ENCODE measurements at regions of chr19 and their contacts with region 1.

Region 1: GRCh38 chr19:39671738-39672363 is 16.1 kb downstream of the LGALS16 start:
- DNase-seq: peak; percentile 78
- H3K4me3 Mint-ChIP-seq: no peak overlapping the region
- H3K27ac Mint-ChIP-seq: no peak overlapping the region
- H3K4me1 Mint-ChIP-seq: peaks cover 35% of the 10 kb centered on the region
- H3K27me3 Mint-ChIP-seq: peaks cover 1% of the 10 kb centered on the region

Region 2: GRCh38 chr19:39125554-39126311 is 546.1 kb before region 1 on chr19 and contains the start of gene PAK4:
- CTCF ChIA-PET with region 1: no interaction called
- intact Hi-C with region 1: loop called (anchors 10 kb)
- DNase-seq: peak; percentile 99
- H3K4me3 Mint-ChIP-seq: peak within 1 kb of the TSS; percentile 92
- H3K27ac Mint-ChIP-seq: peak within 1 kb of the TSS; percentile 92
- H3K4me1 Mint-ChIP-seq: peaks cover 38% of the 10 kb centered on the region
- H3K27me3 Mint-ChIP-seq: peaks cover 2% of the 10 kb centered on the region
- total RNA-seq, gene PAK4: 16.9 to 18.1 TPM

Region 3: GRCh38 chr19:39474139-39474622 is 197.7 kb before region 1 on chr19:
- CTCF ChIA-PET with region 1: no interaction called
- intact Hi-C with region 1: no loop called
- DNase-seq: peak; percentile 76
- H3K4me3 Mint-ChIP-seq: no peak overlapping the region
- H3K27ac Mint-ChIP-seq: no peak overlapping the region
- H3K4me1 Mint-ChIP-seq: peaks cover 17% of the 10 kb centered on the region
- H3K27me3 Mint-ChIP-seq: no peaks in the 10 kb centered on the region

Region 4: GRCh38 chr19:39502640-39503417 is 169.0 kb before region 1 on chr19:
- CTCF ChIA-PET with region 1: interaction called, 7 read pairs
- intact Hi-C with region 1: loop called (anchors 1 kb)
- DNase-seq: peak; percentile 68
- H3K4me3 Mint-ChIP-seq: no peak overlapping the region
- H3K27ac Mint-ChIP-seq: no peak overlapping the region
- H3K4me1 Mint-ChIP-seq: peaks cover 34% of the 10 kb centered on the region
- H3K27me3 Mint-ChIP-seq: peaks cover 65% of the 10 kb centered on the region

Region 5: DNA sequence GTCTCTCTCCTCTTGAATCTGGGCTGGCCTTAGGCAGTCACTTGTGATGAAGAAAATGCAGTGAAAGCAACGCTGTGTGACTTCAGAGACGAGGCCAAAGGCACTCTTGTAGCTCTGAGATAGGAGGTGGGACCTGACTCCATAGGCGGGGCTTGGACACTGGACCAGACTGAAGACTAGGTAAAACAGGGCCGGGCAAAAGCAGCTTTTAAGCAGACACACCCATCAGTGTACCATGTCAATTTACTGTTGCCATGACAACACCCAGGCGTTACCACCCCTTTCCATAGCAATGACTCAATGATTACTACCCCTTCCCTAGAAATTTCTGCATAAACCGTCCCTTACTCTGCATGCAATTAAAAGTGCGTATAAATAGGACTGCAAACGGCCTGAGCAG is 125.3 kb before region 1 on chr19:
- CTCF ChIA-PET with region 1: interaction called, 92 read pairs
- intact Hi-C with region 1: loop called (anchors 1 kb)
- DNase-seq: no peak
- H3K4me3 Mint-ChIP-seq: no peak overlapping the region
- H3K27ac Mint-ChIP-seq: no peak overlapping the region
- H3K4me1 Mint-ChIP-seq: peaks cover 45% of the 10 kb centered on the region
- H3K27me3 Mint-ChIP-seq: no peaks in the 10 kb centered on the region

Region 6: DNA sequence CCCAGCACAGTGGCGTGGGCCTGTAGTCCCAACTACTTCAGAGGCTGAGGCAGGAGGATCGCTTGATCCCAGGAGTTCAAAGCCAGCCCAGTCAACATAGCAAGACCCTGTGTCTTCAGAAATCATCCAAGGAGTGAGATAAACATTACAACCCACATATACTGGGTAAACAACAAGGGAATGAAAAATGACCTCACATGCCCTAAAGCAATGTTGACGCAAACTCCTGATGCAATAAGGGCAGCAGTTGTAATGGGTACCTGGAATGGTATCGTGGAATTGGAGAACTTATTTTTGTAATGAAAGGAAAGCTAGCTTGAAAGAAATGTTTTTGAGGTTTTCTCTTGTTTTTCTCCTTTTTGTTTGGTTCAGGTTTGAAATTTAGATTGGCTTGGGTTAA is 40.7 kb before region 1 on chr19:
- CTCF ChIA-PET with region 1: interaction called, 11 read pairs
- intact Hi-C with region 1: no loop called
- DNase-seq: no peak
- H3K4me3 Mint-ChIP-seq: no peak overlapping the region
- H3K27ac Mint-ChIP-seq: no peak overlapping the region
- H3K4me1 Mint-ChIP-seq: no peaks in the 10 kb centered on the region
- H3K27me3 Mint-ChIP-seq: peaks cover 7% of the 10 kb centered on the region

Region 7: GRCh38 chr19:39846176-39846677 is 174.4 kb after region 1 on chr19 and contains the start of gene FBL:
- CTCF ChIA-PET with region 1: interaction called, 17 read pairs
- intact Hi-C with region 1: loop called (anchors 1 kb)
- DNase-seq: peak; percentile 98
- H3K4me3 Mint-ChIP-seq: peak within 1 kb of the TSS; percentile 91
- H3K27ac Mint-ChIP-seq: peak within 1 kb of the TSS; percentile 88
- H3K4me1 Mint-ChIP-seq: peaks cover 38% of the 10 kb centered on the region
- H3K27me3 Mint-ChIP-seq: no peaks in the 10 kb centered on the region
- total RNA-seq, gene FBL: 742 to 785 TPM